A549 (cell line): ENCODE measurements at regions of chr11 and their contacts with region 1.

Region 1: DNA sequence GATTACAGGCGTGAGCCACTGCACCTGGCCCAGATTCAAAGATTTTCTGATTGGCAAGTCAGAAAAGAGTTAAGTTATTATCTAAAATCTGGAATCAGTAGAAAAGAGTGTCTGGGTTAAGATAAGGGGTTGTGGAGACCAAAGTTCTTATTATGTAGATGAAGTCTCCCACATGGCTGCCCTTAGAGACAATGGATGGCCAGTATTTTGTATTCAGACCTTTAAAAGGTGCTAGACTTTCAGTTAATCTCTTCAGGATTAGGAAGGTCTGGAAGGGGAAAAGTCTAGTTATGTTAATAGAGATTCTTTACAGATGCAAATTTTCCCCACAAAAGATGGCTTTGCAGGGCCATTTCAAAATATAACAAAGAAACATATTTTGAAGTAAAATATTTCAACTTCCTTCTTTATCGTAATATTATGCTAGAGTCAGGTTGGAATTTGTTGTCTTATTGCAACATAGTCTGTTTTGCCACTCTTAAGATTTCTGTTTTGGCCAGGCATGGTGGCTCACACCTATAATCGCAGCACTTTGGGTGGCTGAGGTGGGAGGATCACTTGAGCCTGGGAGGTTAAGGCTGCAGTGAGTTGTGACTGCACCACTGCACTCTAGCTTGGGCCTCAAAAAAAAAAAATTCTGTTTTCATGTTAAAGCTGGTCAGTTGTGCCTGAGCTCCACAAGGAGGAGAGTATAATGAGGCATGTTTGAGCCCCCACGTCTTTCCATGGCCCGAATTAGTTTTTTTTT is 14.0 kb downstream of the GRAMD1B start:
- DNase-seq: no peak
- ATAC-seq: no peak; a peak in 1 of 6 replicates
- H3K4me3 ChIP-seq: no peak overlapping the region
- H3K27ac ChIP-seq: peak overlapping the region in 1 of 2 experiments; percentile 57; a peak in 3 of 6 replicates
- H3K4me1 ChIP-seq: peaks cover 20% of the 10 kb centered on the region
- CTCF ChIP-seq: no peak
- EP300 ChIP-seq: no peak
- POLR2A ChIP-seq: no peak
- RAD21 ChIP-seq: no peak

Region 2: GRCh38 chr11:123454060-123454651 is 10.1 kb after region 1 on chr11:
- CTCF ChIA-PET with region 1: interaction called, 3 read pairs
- POLR2A ChIA-PET with region 1: interaction called, 10 read pairs
- DNase-seq: peak; percentile 81 to 97
- ATAC-seq: peak; percentile 93 to 94
- H3K4me3 ChIP-seq: peak overlapping the region; percentile 48
- H3K27ac ChIP-seq: peak overlapping the region; percentile 87 to 99
- H3K4me1 ChIP-seq: peaks cover 75% of the 10 kb centered on the region
- CTCF ChIP-seq: no peak
- EP300 ChIP-seq: peak; percentile 87 to 91
- POLR2A ChIP-seq: peak; percentile 20; the same call in 1 of the 2 replicates
- RAD21 ChIP-seq: peak in 1 of 2 experiments; percentile 3; a peak in 1 of 5 replicates